Activated naive CD4-positive, alpha-beta T cell treated with anti-CD3 and anti-CD28 coated beads for 36 hours (primary cell): ENCODE measurements at regions of chr12 and their contacts with region 1.

Region 1: GRCh38 chr12:131949431-131950181 is at the start of gene EP400:
- DNase-seq: peak; percentile 94
- H3K4me3 Mint-ChIP-seq: peak within 1 kb of the TSS; percentile 91
- H3K27ac Mint-ChIP-seq: peak within 1 kb of the TSS; percentile 87
- H3K4me1 Mint-ChIP-seq: peaks cover 42% of the 10 kb centered on the region
- H3K27me3 Mint-ChIP-seq: no peaks in the 10 kb centered on the region
- total RNA-seq, gene EP400: 36.8 to 40.6 TPM

Region 2: GRCh38 chr12:130871286-130872178 is 1078.1 kb before region 1 on chr12 and contains the start of gene RAN:
- CTCF ChIA-PET with region 1: no interaction called
- intact Hi-C with region 1: loop called (anchors 1 kb)
- DNase-seq: peak; percentile 91
- H3K4me3 Mint-ChIP-seq: peak within 1 kb of the TSS; percentile 98
- H3K27ac Mint-ChIP-seq: peak within 1 kb of the TSS; percentile 99
- H3K4me1 Mint-ChIP-seq: peaks cover 61% of the 10 kb centered on the region
- H3K27me3 Mint-ChIP-seq: no peaks in the 10 kb centered on the region
- total RNA-seq, gene RAN: 2,370 to 2,418 TPM

Region 3: DNA sequence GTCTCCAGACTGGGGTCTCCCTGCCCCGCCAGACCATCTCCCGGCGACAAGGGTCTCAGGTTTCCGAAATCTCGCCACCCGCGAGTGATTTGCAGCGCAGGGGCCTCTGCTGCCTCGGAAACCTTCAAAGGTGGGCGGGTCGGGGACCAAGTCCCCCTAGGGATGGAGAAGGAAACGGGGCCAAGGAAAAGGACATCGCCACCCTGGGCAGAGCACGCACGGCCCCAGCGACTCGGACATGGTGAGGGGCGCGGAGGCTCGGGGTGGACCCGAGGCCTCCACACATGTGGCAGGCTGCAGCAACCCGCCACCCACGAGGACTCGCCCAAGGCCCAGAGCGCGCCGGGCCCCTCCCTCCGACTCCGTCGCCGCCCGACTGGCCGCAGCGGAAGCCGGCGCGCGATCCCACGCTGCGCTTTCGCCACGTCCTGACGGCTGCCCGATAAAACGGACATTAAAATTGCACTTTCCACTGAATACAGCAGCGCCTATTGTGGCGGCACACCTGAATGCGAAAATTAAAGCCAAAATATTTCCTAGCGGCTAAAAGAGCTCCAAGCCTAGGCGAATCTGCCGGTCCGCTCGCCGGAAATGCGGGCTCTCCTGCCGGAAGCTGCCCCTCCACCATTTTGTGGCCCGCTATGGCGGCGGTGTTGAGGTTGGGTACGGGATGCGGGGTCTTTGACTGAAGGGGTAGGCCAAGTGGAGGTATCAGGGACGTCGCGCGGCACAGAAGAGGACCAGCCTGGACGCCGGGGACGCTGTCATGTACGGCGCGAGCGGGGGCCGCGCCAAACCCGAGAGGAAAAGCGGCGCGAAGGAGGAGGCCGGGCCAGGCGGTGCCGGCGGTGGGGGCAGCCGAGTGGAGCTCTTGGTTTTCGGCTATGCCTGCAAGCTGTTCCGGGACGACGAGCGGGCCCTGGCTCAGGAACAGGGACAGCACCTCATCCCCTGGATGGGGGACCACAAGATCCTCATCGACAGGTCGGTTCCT is 238.8 kb before region 1 on chr12 and contains the start of gene SFSWAP:
- CTCF ChIA-PET with region 1: no interaction called
- intact Hi-C with region 1: loop called (anchors 5 kb)
- DNase-seq: peak; percentile 79
- H3K4me3 Mint-ChIP-seq: peak within 1 kb of the TSS; percentile 89
- H3K27ac Mint-ChIP-seq: peak within 1 kb of the TSS; percentile 96
- H3K4me1 Mint-ChIP-seq: peaks cover 23% of the 10 kb centered on the region
- H3K27me3 Mint-ChIP-seq: no peaks in the 10 kb centered on the region
- total RNA-seq, gene SFSWAP: 51.3 TPM

Region 4: GRCh38 chr12:131850856-131851559 is 98.6 kb before region 1 on chr12:
- CTCF ChIA-PET with region 1: no interaction called
- intact Hi-C with region 1: loop called (anchors 1 kb)
- DNase-seq: peak; percentile 30
- H3K4me3 Mint-ChIP-seq: no peak overlapping the region
- H3K27ac Mint-ChIP-seq: no peak overlapping the region
- H3K4me1 Mint-ChIP-seq: no peaks in the 10 kb centered on the region
- H3K27me3 Mint-ChIP-seq: no peaks in the 10 kb centered on the region

Region 5: DNA sequence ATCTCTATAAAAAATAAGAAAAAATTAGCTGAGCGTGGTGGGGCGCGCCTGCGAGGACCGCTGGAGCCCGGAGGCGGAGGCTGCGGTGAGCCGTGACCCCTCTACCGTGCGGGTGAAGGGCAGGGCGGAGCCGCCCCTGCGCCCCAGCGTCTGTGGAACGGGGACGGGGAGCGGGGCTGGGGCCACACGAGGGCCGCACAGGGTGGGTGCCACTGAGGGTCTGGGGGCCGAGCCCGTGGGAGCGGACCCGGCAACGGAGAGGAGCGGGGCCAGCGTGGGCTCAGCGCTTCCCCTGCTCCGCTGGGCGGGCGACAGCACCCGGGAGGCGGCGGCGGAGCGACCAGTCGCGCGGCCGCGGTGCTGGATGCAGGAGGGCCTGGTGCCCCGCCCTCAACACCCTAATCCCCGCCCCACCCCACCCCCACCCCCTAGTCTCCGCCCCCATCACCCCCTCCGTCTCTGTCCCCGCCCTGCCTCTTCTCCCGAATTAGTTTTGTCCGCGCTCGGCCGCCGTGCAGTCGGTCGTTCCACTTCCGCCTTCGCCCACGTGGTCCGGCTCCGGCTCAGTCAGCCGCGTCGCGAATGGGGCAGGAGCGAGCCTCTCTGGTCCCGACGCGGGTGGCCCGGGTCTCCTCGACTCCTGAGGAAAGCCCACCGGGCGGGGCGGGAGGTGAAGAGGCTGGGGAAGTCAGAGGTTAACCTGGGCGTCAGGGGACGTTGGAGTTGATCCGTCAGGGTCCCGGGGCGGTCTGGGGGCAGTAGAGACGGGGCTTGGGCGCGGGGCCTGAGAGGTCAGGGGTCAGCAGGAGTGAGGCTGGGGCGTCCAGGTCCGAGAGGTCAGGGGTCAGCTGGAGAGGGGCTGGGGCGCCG is 20.7 kb before region 1 on chr12 and contains the start of gene PUS1:
- CTCF ChIA-PET with region 1: no interaction called
- intact Hi-C with region 1: loop called (anchors 1 kb)
- DNase-seq: peak; percentile 95
- H3K4me3 Mint-ChIP-seq: peak within 1 kb of the TSS; percentile 96
- H3K27ac Mint-ChIP-seq: peak within 1 kb of the TSS; percentile 80
- H3K4me1 Mint-ChIP-seq: peaks cover 30% of the 10 kb centered on the region
- H3K27me3 Mint-ChIP-seq: no peaks in the 10 kb centered on the region
- total RNA-seq, gene PUS1: 37.7 to 38.8 TPM

Region 6: GRCh38 chr12:132144115-132144812 is 194.7 kb after region 1 on chr12 and contains the starts of genes DDX51 and NOC4L:
- CTCF ChIA-PET with region 1: no interaction called
- intact Hi-C with region 1: loop called (anchors 10 kb)
- DNase-seq: peak; percentile 94
- H3K4me3 Mint-ChIP-seq: peak within 1 kb of the TSS; percentile 90
- H3K27ac Mint-ChIP-seq: peak within 1 kb of the TSS; percentile 87
- H3K4me1 Mint-ChIP-seq: peaks cover 31% of the 10 kb centered on the region
- H3K27me3 Mint-ChIP-seq: no peaks in the 10 kb centered on the region
- total RNA-seq, gene DDX51: 18.8 to 20.0 TPM
- total RNA-seq, gene NOC4L: 27.1 to 27.4 TPM